ENCODE measurements at regions of chr2 and their contacts with region 1.

Region 1: GRCh38 chr2:201231781-201232466 is 28.4 kb upstream of the CASP8 start:
- DNase-seq: peak; percentile 90
- H3K4me3 ChIP-seq: no peak overlapping the region
- H3K27ac ChIP-seq: peak overlapping the region in 3 of 4 donors; percentile 10 to 40 (median 23)
- H3K4me1 ChIP-seq: peaks cover 0 to 26% (median 6%) of the 10 kb centered on the region in 4 donors
- H3K27me3 ChIP-seq: no peaks in the 10 kb centered on the region
- CTCF ChIP-seq: peak; percentile 14 to 74 (median 64)
- EP300 ChIP-seq: no peak
- POLR2A ChIP-seq: no peak

Region 2: DNA sequence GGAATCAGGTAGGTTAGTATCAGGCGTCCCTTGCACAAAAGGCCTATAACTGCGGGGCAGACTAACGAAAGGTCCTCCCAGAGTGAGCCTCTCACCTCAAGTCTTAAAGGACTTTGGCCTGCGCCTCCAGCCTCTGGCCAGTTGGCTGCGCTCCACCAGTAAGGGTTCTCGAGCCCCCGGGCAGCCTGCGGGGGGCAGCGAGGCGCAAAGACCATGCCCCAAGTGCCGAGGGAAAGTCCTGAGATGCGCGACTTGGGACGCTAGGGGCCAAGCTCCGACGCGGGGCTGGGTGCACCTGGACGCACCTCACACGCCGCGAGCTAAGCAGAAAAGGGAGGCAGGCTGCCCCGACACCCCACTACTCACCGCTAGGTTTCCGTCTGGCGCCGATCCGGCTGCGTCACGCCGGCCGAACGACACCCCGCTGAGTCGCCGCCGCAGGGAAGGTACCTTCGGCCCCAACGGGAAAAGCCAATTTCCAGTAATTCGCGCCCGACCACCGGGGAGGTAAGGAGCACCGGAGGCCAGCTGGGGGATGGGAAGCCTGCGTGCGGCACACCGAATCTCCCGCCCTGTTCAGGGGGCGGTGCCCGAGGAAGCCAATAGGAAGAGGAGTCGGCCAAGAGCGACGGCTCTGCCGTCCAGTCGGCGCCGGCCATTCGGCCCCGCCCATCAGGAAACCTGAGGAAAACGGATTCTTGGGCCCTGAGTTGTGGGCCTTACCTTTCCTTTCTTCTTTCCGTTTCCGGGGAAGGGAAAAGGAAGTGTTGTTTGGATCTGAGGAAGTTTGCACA is 268.6 kb before region 1 on chr2 and contains the start of gene ORC2:
- intact Hi-C with region 1: loop called (anchors 10 kb)
- DNase-seq: peak; percentile 97
- H3K4me3 ChIP-seq: peak within 1 kb of the TSS; percentile 71 to 98 (median 91)
- H3K27ac ChIP-seq: peak within 1 kb of the TSS; percentile 84 to 96 (median 90)
- H3K4me1 ChIP-seq: peaks cover 0 to 28% (median 16%) of the 10 kb centered on the region in 4 donors
- H3K27me3 ChIP-seq: no peaks in the 10 kb centered on the region
- CTCF ChIP-seq: peak; percentile 61 to 78 (median 70)
- EP300 ChIP-seq: no peak
- POLR2A ChIP-seq: no peak
- total RNA-seq, gene ORC2: 12.9 to 19.3 (median 15.7) TPM

Region 3: GRCh38 chr2:201363857-201364560 is 132.1 kb after region 1 on chr2:
- intact Hi-C with region 1: loop called (anchors 2 kb)
- DNase-seq: no peak
- H3K4me3 ChIP-seq: no peak overlapping the region
- H3K27ac ChIP-seq: no peak overlapping the region
- H3K4me1 ChIP-seq: no peaks in the 10 kb centered on the region
- H3K27me3 ChIP-seq: no peaks in the 10 kb centered on the region
- CTCF ChIP-seq: peak; percentile 40 to 80 (median 62)
- EP300 ChIP-seq: no peak
- POLR2A ChIP-seq: no peak

Measured in sigmoid colon (tissue), 7 donors.